ENCODE measurements at regions of chr18 and their contacts with region 1.

Region 1: GRCh38 chr18:33404244-33404873 is 36.2 kb downstream of the CCDC178 start:
- DNase-seq: peak; percentile 5
- H3K4me3 ChIP-seq: no peak overlapping the region
- H3K27ac ChIP-seq: no peak overlapping the region
- H3K4me1 ChIP-seq: no peaks in the 10 kb centered on the region
- CTCF ChIP-seq: peak; percentile 72

Region 2: GRCh38 chr18:33761363-33761762 is 357.0 kb after region 1 on chr18:
- CTCF ChIA-PET with region 1: no interaction called
- POLR2A ChIA-PET with region 1: no interaction called
- intact Hi-C with region 1: loop called (anchors 10 kb)
- DNase-seq: peak; percentile 58
- H3K4me3 ChIP-seq: no peak overlapping the region
- H3K27ac ChIP-seq: no peak overlapping the region
- H3K4me1 ChIP-seq: no peaks in the 10 kb centered on the region
- CTCF ChIP-seq: peak; percentile 66